PC-9 (cell line): ENCODE measurements at regions of chr4 and their contacts with region 1.

Region 1: GRCh38 chr4:138494931-138495330 is 252.8 kb upstream of the SLC7A11 start:
- DNase-seq: peak in 1 of 2 experiments; percentile 41
- H3K4me3 ChIP-seq: no peak overlapping the region
- H3K27ac ChIP-seq: no peak overlapping the region
- H3K4me1 ChIP-seq: no peaks in the 10 kb centered on the region
- H3K27me3 ChIP-seq: no peaks in the 10 kb centered on the region
- CTCF ChIP-seq: 0 out of 2 replicates have a peak, but pooled peaks have one; percentile 31

Region 2: GRCh38 chr4:138367942-138368341 is 127.0 kb before region 1 on chr4:
- CTCF ChIA-PET with region 1: no interaction called
- POLR2A ChIA-PET with region 1: no interaction called
- intact Hi-C with region 1: no loop called
- DNase-seq: no peak
- H3K4me3 ChIP-seq: no peak overlapping the region
- H3K27ac ChIP-seq: no peak overlapping the region
- H3K4me1 ChIP-seq: no peaks in the 10 kb centered on the region
- H3K27me3 ChIP-seq: no peaks in the 10 kb centered on the region
- CTCF ChIP-seq: no peak

Region 3: GRCh38 chr4:138919094-138919936 is 424.4 kb after region 1 on chr4:
- CTCF ChIA-PET with region 1: interaction called, 5 read pairs
- POLR2A ChIA-PET with region 1: no interaction called
- intact Hi-C with region 1: loop called (anchors 10 kb)
- DNase-seq: peak; percentile 44 to 77
- H3K4me3 ChIP-seq: no peak overlapping the region
- H3K27ac ChIP-seq: no peak overlapping the region
- H3K4me1 ChIP-seq: no peaks in the 10 kb centered on the region
- H3K27me3 ChIP-seq: no peaks in the 10 kb centered on the region
- CTCF ChIP-seq: peak; percentile 69